Activated T-helper 1 cell treated with anti-CD3 and anti-CD28 coated beads, Interleukin-12 subunit alpha, Interleukin-12 subunit beta, Interleukin-2, Interleukin-4 antibody, amounts not matched to agents 30 ng/mL and 10 ng/mL and 1 ng/mL, durations not matched to agents 14 hours and 24 hours and 36 hours (primary cell): ENCODE measurements at regions of chrX and their contacts with region 1.

Region 1: GRCh38 chrX:79259073-79259689 is 108.0 kb downstream of the ITM2A start:
- DNase-seq: peak; percentile 57
- H3K4me3 Mint-ChIP-seq: peak overlapping the region; percentile 45
- H3K27ac Mint-ChIP-seq: peak overlapping the region; percentile 87
- H3K4me1 Mint-ChIP-seq: peaks cover 86% of the 10 kb centered on the region
- H3K27me3 Mint-ChIP-seq: no peaks in the 10 kb centered on the region

Region 2: GRCh38 chrX:77431227-77431626 is 1828.0 kb before region 1 on chrX:
- intact Hi-C with region 1: no loop called
- DNase-seq: no peak
- H3K4me3 Mint-ChIP-seq: no peak overlapping the region
- H3K27ac Mint-ChIP-seq: no peak overlapping the region
- H3K4me1 Mint-ChIP-seq: no peaks in the 10 kb centered on the region
- H3K27me3 Mint-ChIP-seq: no peaks in the 10 kb centered on the region

Region 3: DNA sequence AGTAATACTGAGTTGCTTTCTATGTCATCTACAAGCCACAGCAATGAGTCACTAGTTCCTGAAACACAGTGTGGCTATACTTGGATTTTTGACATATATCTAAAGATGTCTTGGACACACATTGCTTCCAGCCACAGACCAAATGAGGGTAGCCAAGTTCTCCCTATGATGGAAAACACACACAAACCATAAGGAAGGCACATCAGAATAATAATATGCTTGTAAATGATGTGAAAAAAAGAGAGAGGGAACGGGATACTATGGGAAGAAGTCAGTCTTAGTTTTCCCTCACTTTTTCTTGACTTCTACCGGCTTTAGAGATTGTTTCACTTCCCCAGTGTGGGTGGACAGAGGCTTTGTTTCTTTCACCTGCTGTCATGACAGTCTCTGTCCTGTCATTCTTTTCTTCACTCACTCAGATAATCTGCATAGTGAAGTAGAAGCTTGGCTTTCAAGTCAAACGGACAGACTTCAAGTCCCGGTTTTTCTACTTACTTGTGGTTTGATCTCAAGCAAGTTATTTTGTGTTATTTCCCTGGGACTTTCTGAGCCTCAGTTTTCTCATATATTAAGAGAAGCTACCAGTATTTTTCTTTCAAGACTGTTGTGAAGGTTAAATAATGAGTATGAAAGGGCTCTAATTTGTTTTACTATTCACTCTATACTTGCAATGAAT is 279.3 kb before region 1 on chrX:
- intact Hi-C with region 1: loop called (anchors 1 kb)
- DNase-seq: no peak
- H3K4me3 Mint-ChIP-seq: peak overlapping the region; percentile 67
- H3K27ac Mint-ChIP-seq: peak overlapping the region; percentile 100
- H3K4me1 Mint-ChIP-seq: peaks cover 35% of the 10 kb centered on the region
- H3K27me3 Mint-ChIP-seq: no peaks in the 10 kb centered on the region

Region 4: GRCh38 chrX:79096145-79096556 is 163.0 kb before region 1 on chrX:
- intact Hi-C with region 1: loop called (anchors 5 kb)
- DNase-seq: no peak
- H3K4me3 Mint-ChIP-seq: peak overlapping the region; percentile 63
- H3K27ac Mint-ChIP-seq: peak overlapping the region; percentile 91
- H3K4me1 Mint-ChIP-seq: peaks cover 43% of the 10 kb centered on the region
- H3K27me3 Mint-ChIP-seq: no peaks in the 10 kb centered on the region

Region 5: GRCh38 chrX:79161655-79162054 is 97.5 kb before region 1 on chrX:
- intact Hi-C with region 1: loop called (anchors 1 kb)
- DNase-seq: peak; percentile 48
- H3K4me3 Mint-ChIP-seq: peak overlapping the region; percentile 89
- H3K27ac Mint-ChIP-seq: peak overlapping the region; percentile 99
- H3K4me1 Mint-ChIP-seq: peaks cover 53% of the 10 kb centered on the region
- H3K27me3 Mint-ChIP-seq: no peaks in the 10 kb centered on the region

Region 6: GRCh38 chrX:79182616-79183015 is 76.6 kb before region 1 on chrX:
- intact Hi-C with region 1: loop called (anchors 1 kb)
- DNase-seq: no peak
- H3K4me3 Mint-ChIP-seq: peak overlapping the region; percentile 72
- H3K27ac Mint-ChIP-seq: peak overlapping the region; percentile 81
- H3K4me1 Mint-ChIP-seq: peaks cover 52% of the 10 kb centered on the region
- H3K27me3 Mint-ChIP-seq: no peaks in the 10 kb centered on the region

Region 7: GRCh38 chrX:79231662-79232061 is 27.5 kb before region 1 on chrX:
- intact Hi-C with region 1: no loop called
- DNase-seq: no peak
- H3K4me3 Mint-ChIP-seq: no peak overlapping the region
- H3K27ac Mint-ChIP-seq: no peak overlapping the region
- H3K4me1 Mint-ChIP-seq: peaks cover 17% of the 10 kb centered on the region
- H3K27me3 Mint-ChIP-seq: no peaks in the 10 kb centered on the region

Region 8: GRCh38 chrX:79366873-79367749 is 107.9 kb after region 1 on chrX and contains the start of gene ITM2A:
- intact Hi-C with region 1: loop called (anchors 1 kb)
- DNase-seq: peak; percentile 37
- H3K4me3 Mint-ChIP-seq: peak within 1 kb of the TSS; percentile 94
- H3K27ac Mint-ChIP-seq: peak within 1 kb of the TSS; percentile 95
- H3K4me1 Mint-ChIP-seq: peaks cover 35% of the 10 kb centered on the region
- H3K27me3 Mint-ChIP-seq: no peaks in the 10 kb centered on the region
- total RNA-seq, gene ITM2A: 114 and 116 TPM in 2 replicates